CD4-positive, alpha-beta memory T cell (primary cell): ENCODE measurements at regions of chr12 and their contacts with region 1.

Region 1: DNA sequence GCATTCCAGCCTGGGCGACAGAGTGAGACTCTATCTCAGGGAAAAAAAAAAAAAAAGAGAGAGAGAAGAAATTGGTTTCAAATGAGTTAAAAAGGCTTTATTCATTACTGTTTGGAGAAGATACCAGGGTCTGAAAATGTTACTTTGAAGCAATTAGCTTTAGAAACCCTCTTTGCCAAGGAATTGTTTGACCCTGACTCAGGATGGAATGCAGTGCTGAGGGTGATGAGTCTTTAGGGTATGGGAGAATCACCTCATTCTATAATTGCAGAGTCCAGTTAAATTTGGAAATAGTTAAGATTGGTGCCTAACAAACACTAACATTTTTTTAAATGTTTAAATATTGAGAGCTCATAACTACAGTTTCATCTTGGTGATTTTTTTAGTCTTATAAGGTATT is 13.3 kb downstream of the RAP1B start:
- DNase-seq: no peak
- H3K4me3 ChIP-seq: no peak overlapping the region
- H3K4me3 Mint-ChIP-seq: peak overlapping the region in 5 of 8 donors; percentile 4 to 55 (median 21)
- H3K27ac ChIP-seq: no peak overlapping the region
- H3K27ac Mint-ChIP-seq: peak overlapping the region in 4 of 7 donors; percentile 31 to 60 (median 52)
- H3K4me1 ChIP-seq: peaks cover 87% of the 10 kb centered on the region
- H3K4me1 Mint-ChIP-seq: peaks cover 52 to 92% (median 74%) of the 10 kb centered on the region in 4 donors
- H3K27me3 ChIP-seq: no peaks in the 10 kb centered on the region
- H3K27me3 Mint-ChIP-seq: no peaks in the 10 kb centered on the region

Region 2: GRCh38 chr12:68638721-68639395 is 14.9 kb after region 1 on chr12:
- CTCF ChIA-PET with region 1: interaction called, 3 read pairs
- POLR2A ChIA-PET with region 1: no interaction called
- intact Hi-C with region 1: loop called (anchors 2 kb)
- DNase-seq: no peak
- H3K4me3 ChIP-seq: no peak overlapping the region
- H3K4me3 Mint-ChIP-seq: peak overlapping the region; percentile 42 to 81 (median 62)
- H3K27ac ChIP-seq: no peak overlapping the region
- H3K27ac Mint-ChIP-seq: peak overlapping the region in 5 of 7 donors; percentile 8 to 85 (median 80)
- H3K4me1 ChIP-seq: peaks cover 97% of the 10 kb centered on the region
- H3K4me1 Mint-ChIP-seq: peaks cover 62 to 98% (median 79%) of the 10 kb centered on the region in 4 donors
- H3K27me3 ChIP-seq: no peaks in the 10 kb centered on the region
- H3K27me3 Mint-ChIP-seq: no peaks in the 10 kb centered on the region

Region 3: GRCh38 chr12:68772714-68773113 is 148.7 kb after region 1 on chr12:
- CTCF ChIA-PET with region 1: no interaction called
- POLR2A ChIA-PET with region 1: no interaction called
- intact Hi-C with region 1: no loop called
- DNase-seq: no peak
- H3K4me3 ChIP-seq: no peak overlapping the region
- H3K4me3 Mint-ChIP-seq: peak overlapping the region in 5 of 8 donors; percentile 5 to 70 (median 67)
- H3K27ac ChIP-seq: no peak overlapping the region
- H3K27ac Mint-ChIP-seq: peak overlapping the region in 5 of 7 donors; percentile 31 to 89 (median 71)
- H3K4me1 ChIP-seq: peaks cover 12% of the 10 kb centered on the region
- H3K4me1 Mint-ChIP-seq: peaks cover 9 to 14% (median 12%) of the 10 kb centered on the region in 4 donors
- H3K27me3 ChIP-seq: no peaks in the 10 kb centered on the region
- H3K27me3 Mint-ChIP-seq: no peaks in the 10 kb centered on the region